HepG2 (cell line): ENCODE measurements at regions of chr1 and their contacts with region 1.

Region 1: DNA sequence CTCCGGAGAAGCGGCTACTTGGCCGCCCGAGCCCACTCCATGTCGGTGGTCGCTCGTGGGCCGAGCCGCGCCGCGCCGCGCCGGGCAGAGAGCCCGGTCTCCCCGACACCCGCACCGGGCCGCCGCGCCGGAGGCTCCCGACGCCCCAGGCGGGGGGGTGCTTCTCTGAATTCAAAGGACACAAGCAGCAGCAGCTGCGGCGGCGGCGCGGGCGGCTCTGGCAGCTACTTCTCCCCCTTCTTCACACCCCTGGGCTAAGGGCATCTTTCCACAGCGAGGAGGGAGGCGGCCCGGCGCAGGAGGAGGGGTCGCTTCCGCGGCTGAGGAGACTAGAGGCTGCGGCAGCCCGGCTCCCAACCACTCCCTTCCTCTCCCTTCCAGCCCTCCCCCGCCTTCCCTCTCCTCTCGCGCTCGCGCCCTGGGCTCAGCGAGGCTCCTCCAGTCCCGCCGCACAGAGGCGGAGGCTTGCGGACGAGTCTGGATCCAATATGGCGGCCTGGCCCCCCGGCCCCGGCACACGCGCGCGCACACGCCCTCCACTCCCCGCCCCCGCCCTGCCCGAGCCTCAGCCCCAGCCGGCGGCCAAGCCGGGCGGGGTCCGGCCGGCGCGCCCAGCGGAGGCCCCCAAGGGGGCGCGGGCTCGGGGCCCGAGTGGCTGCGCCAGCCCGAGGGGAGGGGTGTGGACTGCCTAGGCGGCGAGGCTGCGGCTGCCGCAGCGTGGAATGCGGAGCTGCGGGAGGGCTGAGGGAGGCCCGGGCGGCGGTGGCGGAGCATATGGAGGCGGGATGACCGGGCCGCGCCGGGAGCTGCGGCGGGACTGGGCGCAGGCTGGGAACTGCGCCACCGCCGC is at the start of gene CDC42BPA:
- DNase-seq: peak; percentile 46
- ATAC-seq: peak; percentile 85
- H3K4me3 ChIP-seq: peak within 1 kb of the TSS; percentile 89 to 96 (median 91)
- H3K27ac ChIP-seq: peak within 1 kb of the TSS; percentile 78
- H3K4me1 ChIP-seq: peaks cover 9% of the 10 kb centered on the region
- H3K27me3 ChIP-seq: peaks cover 0 to 17% of the 10 kb centered on the region in 2 experiments; a peak in 3 of 5 replicates
- CTCF ChIP-seq: no peak
- EP300 ChIP-seq: no peak
- POLR2A ChIP-seq: peak in 1 of 2 experiments; percentile 62; a peak in 3 of 4 replicates
- RAD21 ChIP-seq: peak; percentile 65
- total RNA-seq, gene CDC42BPA: 15.4 and 16.0 TPM in 2 replicates

Region 2: DNA sequence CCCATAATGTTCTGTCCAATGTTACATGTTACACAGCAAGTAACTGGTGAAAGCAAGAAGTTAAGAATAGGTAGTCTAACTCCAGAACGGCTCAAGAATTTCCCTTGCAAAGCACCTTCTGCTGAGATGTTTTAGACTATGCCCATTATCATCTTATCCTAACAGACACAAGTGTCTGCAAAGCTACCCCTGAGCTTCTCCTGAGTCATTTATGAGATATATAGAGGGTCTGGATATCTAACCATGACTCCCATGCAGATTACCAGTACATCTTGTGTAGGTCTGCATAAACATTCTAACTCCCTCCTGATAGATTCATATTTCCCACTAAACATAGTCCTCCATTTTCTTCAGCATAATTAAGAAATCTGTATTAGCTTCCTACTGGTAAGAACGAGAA is 206.4 kb before region 1 on chr1:
- CTCF ChIA-PET with region 1: no interaction called
- POLR2A ChIA-PET with region 1: no interaction called
- in situ Hi-C with region 1: no loop called
- intact Hi-C with region 1: no loop called
- DNase-seq: no peak
- ATAC-seq: no peak
- H3K4me3 ChIP-seq: no peak overlapping the region
- H3K27ac ChIP-seq: no peak overlapping the region
- H3K4me1 ChIP-seq: no peaks in the 10 kb centered on the region
- H3K27me3 ChIP-seq: no peaks in the 10 kb centered on the region
- CTCF ChIP-seq: no peak
- EP300 ChIP-seq: no peak
- POLR2A ChIP-seq: no peak
- RAD21 ChIP-seq: no peak

Region 3: GRCh38 chr1:227166559-227166958 is 151.7 kb before region 1 on chr1:
- CTCF ChIA-PET with region 1: no interaction called
- POLR2A ChIA-PET with region 1: no interaction called
- in situ Hi-C with region 1: no loop called
- intact Hi-C with region 1: loop called (anchors 10 kb)
- DNase-seq: no peak
- ATAC-seq: no peak
- H3K4me3 ChIP-seq: no peak overlapping the region
- H3K27ac ChIP-seq: no peak overlapping the region
- H3K4me1 ChIP-seq: no peaks in the 10 kb centered on the region
- H3K27me3 ChIP-seq: no peaks in the 10 kb centered on the region
- CTCF ChIP-seq: no peak
- EP300 ChIP-seq: no peak
- POLR2A ChIP-seq: no peak
- RAD21 ChIP-seq: no peak

Region 4: GRCh38 chr1:227234998-227235405 is 83.2 kb before region 1 on chr1:
- CTCF ChIA-PET with region 1: interaction called, 5 read pairs
- POLR2A ChIA-PET with region 1: no interaction called
- in situ Hi-C with region 1: no loop called
- intact Hi-C with region 1: loop called (anchors 2 kb)
- DNase-seq: peak; percentile 83
- ATAC-seq: peak; percentile 97
- H3K4me3 ChIP-seq: no peak overlapping the region
- H3K27ac ChIP-seq: no peak overlapping the region
- H3K4me1 ChIP-seq: no peaks in the 10 kb centered on the region
- H3K27me3 ChIP-seq: no peaks in the 10 kb centered on the region
- CTCF ChIP-seq: peak; percentile 71
- EP300 ChIP-seq: no peak
- POLR2A ChIP-seq: no peak
- RAD21 ChIP-seq: peak; percentile 52; the same call in 1 of the 2 replicates

Region 5: DNA sequence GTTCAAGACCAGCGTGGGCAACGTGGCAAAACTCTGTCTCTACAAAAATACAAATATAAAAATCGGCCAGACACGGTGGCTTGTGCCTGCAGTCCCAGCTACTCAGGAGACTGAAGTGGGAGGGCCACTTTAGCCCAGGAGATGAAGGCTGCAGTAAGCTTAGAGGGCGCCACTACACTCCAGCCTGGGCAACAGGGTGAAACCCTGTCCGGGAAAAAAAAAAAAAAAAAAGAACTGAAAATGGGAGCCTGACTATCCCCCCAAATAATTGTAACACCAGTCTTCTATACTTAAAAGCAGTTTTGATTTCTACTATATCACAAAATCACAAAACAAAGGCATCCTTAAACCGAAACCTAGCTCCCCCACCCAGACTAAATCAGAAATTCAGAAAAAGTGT is 60.3 kb before region 1 on chr1:
- CTCF ChIA-PET with region 1: no interaction called
- POLR2A ChIA-PET with region 1: no interaction called
- in situ Hi-C with region 1: no loop called
- intact Hi-C with region 1: no loop called
- DNase-seq: no peak
- ATAC-seq: peak; percentile 76
- H3K4me3 ChIP-seq: no peak overlapping the region
- H3K27ac ChIP-seq: no peak overlapping the region
- H3K4me1 ChIP-seq: peaks cover 5% of the 10 kb centered on the region; the same call in 1 of the 2 replicates
- H3K27me3 ChIP-seq: no peaks in the 10 kb centered on the region
- CTCF ChIP-seq: peak; percentile 15; the same call in 1 of the 2 replicates
- EP300 ChIP-seq: no peak
- POLR2A ChIP-seq: no peak
- RAD21 ChIP-seq: no peak